Activated CD4-positive, alpha-beta T cell treated with anti-CD3 and anti-CD28 coated beads for 36 hours (primary cell): ENCODE measurements at regions of chr22 and their contacts with region 1.

Region 1: GRCh38 chr22:39932918-39933649 is 27.1 kb upstream of the TMA7B start:
- DNase-seq: peak; percentile 83
- ATAC-seq: peak; percentile 35
- H3K4me3 Mint-ChIP-seq: peak overlapping the region; percentile 69
- H3K27ac Mint-ChIP-seq: peak overlapping the region; percentile 92
- H3K4me1 Mint-ChIP-seq: peaks cover 54% of the 10 kb centered on the region
- H3K27me3 Mint-ChIP-seq: no peaks in the 10 kb centered on the region

Region 2: GRCh38 chr22:39917776-39918495 is 15.1 kb before region 1 on chr22:
- CTCF ChIA-PET with region 1: interaction called, 53 read pairs
- POLR2A ChIA-PET with region 1: interaction called, 6 read pairs
- intact Hi-C with region 1: no loop called
- DNase-seq: no peak
- ATAC-seq: no peak
- H3K4me3 Mint-ChIP-seq: peak overlapping the region; percentile 65
- H3K27ac Mint-ChIP-seq: peak overlapping the region; percentile 89
- H3K4me1 Mint-ChIP-seq: peaks cover 86% of the 10 kb centered on the region
- H3K27me3 Mint-ChIP-seq: no peaks in the 10 kb centered on the region